B cell (primary cell): ENCODE measurements at regions of chr7 and their contacts with region 1.

Region 1: DNA sequence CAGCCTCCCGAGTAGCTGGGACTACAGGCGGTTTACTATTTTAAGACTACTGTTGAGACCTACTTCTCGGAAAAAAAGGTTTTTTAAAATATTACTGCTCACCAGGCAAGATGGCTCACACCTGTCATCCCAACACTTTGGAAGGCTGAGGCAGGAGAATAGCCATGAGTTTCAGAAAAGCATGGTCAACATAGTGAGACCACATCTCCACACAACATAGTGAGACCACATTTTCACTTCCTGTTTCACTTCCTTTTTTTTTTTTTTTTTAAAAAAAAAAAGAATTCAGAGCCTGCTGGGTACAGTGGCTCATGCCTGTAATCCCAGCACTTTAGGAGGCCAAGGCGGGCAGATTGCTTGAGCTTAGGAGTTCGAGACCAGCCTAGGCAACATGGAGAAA is 46.5 kb downstream of the SVOPL start:
- DNase-seq: no peak
- ATAC-seq: no peak
- H3K4me3 ChIP-seq: no peak overlapping the region
- H3K4me3 Mint-ChIP-seq: no peak overlapping the region
- H3K27ac ChIP-seq: no peak overlapping the region
- H3K27ac Mint-ChIP-seq: no peak overlapping the region
- H3K4me1 ChIP-seq: no peaks in the 10 kb centered on the region
- H3K4me1 Mint-ChIP-seq: no peaks in the 10 kb centered on the region
- H3K27me3 ChIP-seq: no peaks in the 10 kb centered on the region
- H3K27me3 Mint-ChIP-seq: no peaks in the 10 kb centered on the region
- CTCF ChIP-seq: no peak

Region 2: DNA sequence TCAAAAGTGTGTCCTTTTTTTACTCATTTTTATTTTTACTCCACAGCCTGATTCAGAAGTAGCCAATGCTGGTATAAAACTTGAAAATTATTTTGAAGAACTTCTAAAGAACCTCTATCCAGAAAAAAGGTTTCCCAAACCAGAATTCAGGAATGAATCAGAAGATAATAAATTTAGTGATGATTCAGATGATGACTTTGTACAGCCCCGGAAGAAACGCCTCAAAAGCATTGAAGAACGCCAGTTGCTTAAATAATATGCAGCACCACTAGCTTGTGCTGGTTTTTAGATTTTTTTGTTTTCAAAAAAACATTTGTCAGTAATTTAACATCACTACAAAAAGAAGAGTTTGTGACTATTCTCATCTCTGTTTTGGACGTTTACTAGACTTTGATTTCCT is 69.9 kb before region 1 on chr7:
- CTCF ChIA-PET with region 1: no interaction called
- POLR2A ChIA-PET with region 1: no interaction called
- intact Hi-C with region 1: loop called (anchors 10 kb)
- DNase-seq: no peak
- ATAC-seq: no peak
- H3K4me3 ChIP-seq: no peak overlapping the region
- H3K4me3 Mint-ChIP-seq: no peak overlapping the region
- H3K27ac ChIP-seq: no peak overlapping the region
- H3K27ac Mint-ChIP-seq: no peak overlapping the region
- H3K4me1 ChIP-seq: no peaks in the 10 kb centered on the region
- H3K4me1 Mint-ChIP-seq: no peaks in the 10 kb centered on the region
- H3K27me3 ChIP-seq: no peaks in the 10 kb centered on the region
- H3K27me3 Mint-ChIP-seq: no peaks in the 10 kb centered on the region
- CTCF ChIP-seq: no peak

Region 3: DNA sequence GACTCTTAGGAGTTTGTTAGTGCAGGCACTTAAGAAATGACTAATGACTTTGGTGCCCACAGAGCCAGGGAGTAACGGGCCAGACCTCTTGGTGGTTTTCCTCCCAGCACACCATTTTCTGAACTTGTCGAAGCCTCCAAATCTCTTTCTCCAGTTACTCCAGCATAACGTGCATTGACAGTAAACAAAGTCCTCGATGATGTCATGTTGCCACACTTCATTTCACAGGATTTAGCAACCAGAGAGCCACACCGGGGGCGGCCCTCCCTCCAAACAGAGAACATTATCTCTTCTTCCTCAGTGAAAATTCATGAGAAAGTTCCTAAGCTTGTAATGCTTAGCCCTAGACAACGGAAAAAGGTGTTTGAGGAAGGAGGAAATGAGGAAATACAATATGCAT is 50.6 kb after region 1 on chr7:
- CTCF ChIA-PET with region 1: no interaction called
- POLR2A ChIA-PET with region 1: no interaction called
- intact Hi-C with region 1: no loop called
- DNase-seq: no peak
- ATAC-seq: no peak
- H3K4me3 ChIP-seq: no peak overlapping the region
- H3K4me3 Mint-ChIP-seq: no peak overlapping the region
- H3K27ac ChIP-seq: no peak overlapping the region
- H3K27ac Mint-ChIP-seq: no peak overlapping the region
- H3K4me1 ChIP-seq: no peaks in the 10 kb centered on the region
- H3K4me1 Mint-ChIP-seq: no peaks in the 10 kb centered on the region
- H3K27me3 ChIP-seq: no peaks in the 10 kb centered on the region
- H3K27me3 Mint-ChIP-seq: no peaks in the 10 kb centered on the region
- CTCF ChIP-seq: no peak